Natural killer cell (primary cell): ENCODE measurements at regions of chr14 and their contacts with region 1.

Region 1: DNA sequence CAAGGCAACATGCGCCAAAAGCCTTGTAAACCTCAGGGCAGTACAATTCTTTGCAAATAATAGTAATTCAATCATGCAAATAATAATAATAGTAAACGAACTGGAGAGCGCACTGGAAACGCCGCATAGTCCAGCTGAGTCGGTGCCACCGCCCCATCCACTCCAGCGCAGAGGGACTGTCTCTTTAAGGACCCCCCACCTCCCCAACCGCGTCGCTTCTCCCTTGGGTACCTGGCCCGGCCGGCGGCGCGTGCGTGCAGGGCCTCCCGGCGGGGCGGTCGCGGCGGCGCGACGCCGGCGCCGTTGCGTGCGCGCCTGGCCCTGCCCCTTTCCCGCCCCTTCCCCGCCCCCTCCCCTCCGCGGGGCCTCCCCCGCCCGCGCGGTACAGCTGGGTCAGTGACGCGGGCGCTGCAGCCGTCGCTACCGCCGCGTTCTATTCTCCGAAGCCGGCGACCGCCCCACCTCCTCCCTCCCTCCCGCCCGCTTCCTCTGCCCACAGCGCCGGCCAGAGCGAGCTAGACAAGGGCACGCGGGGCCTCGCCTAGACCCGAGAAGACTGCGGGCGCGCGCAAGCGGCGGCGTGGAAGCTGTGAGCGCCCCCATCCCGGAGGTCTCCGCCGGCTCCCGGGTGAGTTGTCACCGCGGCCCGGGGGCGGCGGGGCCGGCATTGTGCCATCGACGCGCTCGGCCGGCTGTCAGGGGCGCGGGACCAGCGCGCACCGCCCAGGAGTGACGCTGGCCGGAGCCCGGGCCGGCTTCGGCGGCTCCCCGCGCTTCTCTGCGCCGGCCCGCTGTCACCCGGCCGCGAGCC is at the start of gene SUSD6:
- DNase-seq: peak; percentile 78 to 95
- ATAC-seq: peak; percentile 79 to 92 (median 82)
- H3K4me3 ChIP-seq: peak within 1 kb of the TSS; percentile 88
- H3K4me3 Mint-ChIP-seq: peak within 1 kb of the TSS; percentile 89
- H3K27ac ChIP-seq: peak within 1 kb of the TSS; percentile 76
- H3K27ac Mint-ChIP-seq: peak within 1 kb of the TSS; percentile 95 to 96
- H3K4me1 ChIP-seq: peaks cover 48% of the 10 kb centered on the region
- H3K4me1 Mint-ChIP-seq: peaks cover 51 to 52% of the 10 kb centered on the region in 2 donors
- H3K27me3 ChIP-seq: no peaks in the 10 kb centered on the region
- H3K27me3 Mint-ChIP-seq: no peaks in the 10 kb centered on the region
- CTCF ChIP-seq: no peak
- total RNA-seq, gene SUSD6: 119 to 144 (median 140) TPM

Region 2: DNA sequence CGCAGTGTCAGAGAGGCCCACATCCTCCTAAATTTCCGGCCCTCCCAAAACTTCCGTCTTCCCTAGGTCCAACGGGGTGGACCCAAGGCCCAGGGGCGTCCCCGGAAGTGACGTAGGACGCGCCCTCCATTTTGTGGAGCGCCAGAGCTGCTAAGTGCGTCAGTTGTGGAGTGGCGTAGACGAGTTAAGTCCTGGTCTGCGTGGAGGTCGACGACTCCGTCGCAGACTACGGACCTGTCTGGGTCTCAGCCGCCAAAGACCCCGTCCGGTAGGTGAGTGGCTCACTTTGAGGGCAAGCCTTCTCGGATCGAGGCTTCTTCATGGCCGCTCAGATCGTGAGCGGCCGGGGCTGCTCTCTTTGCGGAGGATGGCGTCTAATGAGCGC is 155.6 kb after region 1 on chr14 and contains the start of gene SRSF5:
- intact Hi-C with region 1: loop called (anchors 1 kb)
- DNase-seq: peak; percentile 95 to 98
- ATAC-seq: peak; percentile 74 to 90 (median 80)
- H3K4me3 ChIP-seq: peak within 1 kb of the TSS; percentile 73
- H3K4me3 Mint-ChIP-seq: peak within 1 kb of the TSS; percentile 100
- H3K27ac ChIP-seq: peak within 1 kb of the TSS; percentile 89
- H3K27ac Mint-ChIP-seq: peak within 1 kb of the TSS; percentile 97 to 99
- H3K4me1 ChIP-seq: peaks cover 35% of the 10 kb centered on the region
- H3K4me1 Mint-ChIP-seq: peaks cover 61 to 65% of the 10 kb centered on the region in 2 donors
- H3K27me3 ChIP-seq: no peaks in the 10 kb centered on the region
- H3K27me3 Mint-ChIP-seq: no peaks in the 10 kb centered on the region
- CTCF ChIP-seq: no peak
- total RNA-seq, gene SRSF5: 1,327 to 1,669 (median 1,634) TPM